Caco-2 (cell line): ENCODE measurements at regions of chr20 and their contacts with region 1.

Region 1: DNA sequence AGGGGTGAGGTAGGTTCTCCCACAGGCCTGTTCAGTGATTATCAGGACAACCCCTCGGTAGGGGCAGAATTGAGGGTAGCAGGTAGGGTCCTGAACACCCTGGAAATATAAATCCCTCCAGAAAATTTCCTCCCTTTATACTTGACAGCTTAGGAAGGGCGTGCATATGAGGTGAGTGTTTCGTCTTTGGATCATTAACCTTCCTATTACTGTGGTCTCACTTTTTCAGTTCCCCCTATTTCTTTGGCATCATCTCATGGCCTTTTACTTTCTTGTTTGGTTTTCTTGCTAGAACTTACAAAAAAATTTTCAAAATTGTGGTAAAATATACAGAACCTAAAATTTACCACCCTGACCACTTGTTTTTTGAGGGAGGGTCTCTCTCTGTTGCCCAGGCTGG is 18.7 kb upstream of the EPB41L1 start:
- DNase-seq: no peak
- H3K4me3 ChIP-seq: no peak overlapping the region
- H3K4me3 Mint-ChIP-seq: no peak overlapping the region
- H3K27ac Mint-ChIP-seq: no peak overlapping the region
- H3K4me1 ChIP-seq: peaks cover 4% of the 10 kb centered on the region
- H3K4me1 Mint-ChIP-seq: peaks cover 17% of the 10 kb centered on the region
- H3K27me3 ChIP-seq: no peaks in the 10 kb centered on the region
- H3K27me3 Mint-ChIP-seq: no peaks in the 10 kb centered on the region
- CTCF ChIP-seq: no peak

Region 2: GRCh38 chr20:36017034-36017951 is 118.5 kb before region 1 on chr20:
- CTCF ChIA-PET with region 1: interaction called, 19 read pairs
- POLR2A ChIA-PET with region 1: no interaction called
- intact Hi-C with region 1: no loop called
- DNase-seq: peak; percentile 29 to 37
- H3K4me3 ChIP-seq: no peak overlapping the region
- H3K4me3 Mint-ChIP-seq: no peak overlapping the region
- H3K27ac Mint-ChIP-seq: peak overlapping the region; percentile 77
- H3K4me1 ChIP-seq: peaks cover 20% of the 10 kb centered on the region
- H3K4me1 Mint-ChIP-seq: peaks cover 22% of the 10 kb centered on the region
- H3K27me3 ChIP-seq: no peaks in the 10 kb centered on the region
- H3K27me3 Mint-ChIP-seq: no peaks in the 10 kb centered on the region
- CTCF ChIP-seq: no peak

Region 3: DNA sequence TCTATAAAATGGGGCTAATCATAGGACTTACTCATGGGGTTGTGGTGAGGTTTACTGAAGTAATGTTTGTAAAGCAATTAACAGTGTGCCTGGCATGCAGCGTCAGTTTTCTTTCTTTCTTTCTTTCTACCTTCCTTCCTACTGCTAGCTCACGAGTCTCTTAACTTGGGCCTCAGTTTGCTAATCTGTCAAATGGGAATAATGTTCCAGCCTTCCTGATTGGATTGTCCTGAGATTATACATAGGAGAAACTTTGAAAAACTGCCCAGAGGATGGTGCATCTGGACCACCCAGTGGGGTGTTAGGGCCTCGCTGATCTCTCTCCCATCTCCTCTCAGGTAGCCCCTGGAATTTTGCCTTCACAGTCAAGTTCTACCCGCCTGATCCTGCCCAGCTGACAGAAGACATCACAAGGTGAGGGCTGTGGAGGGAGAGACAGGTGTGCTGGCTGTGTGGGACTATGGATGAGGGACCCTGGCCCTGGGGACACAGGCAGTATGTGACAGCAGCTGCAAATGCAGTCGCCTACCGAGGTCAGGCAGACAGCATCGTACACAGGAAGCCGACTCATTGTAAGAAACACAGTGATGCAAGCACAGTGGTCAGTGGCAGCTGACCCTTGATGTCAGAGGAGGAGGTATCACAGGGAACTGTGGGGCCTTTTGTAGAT is 46.2 kb after region 1 on chr20:
- CTCF ChIA-PET with region 1: no interaction called
- POLR2A ChIA-PET with region 1: no interaction called
- intact Hi-C with region 1: no loop called
- DNase-seq: no peak
- H3K4me3 ChIP-seq: no peak overlapping the region
- H3K4me3 Mint-ChIP-seq: no peak overlapping the region
- H3K27ac Mint-ChIP-seq: no peak overlapping the region
- H3K4me1 ChIP-seq: no peaks in the 10 kb centered on the region
- H3K4me1 Mint-ChIP-seq: no peaks in the 10 kb centered on the region
- H3K27me3 ChIP-seq: no peaks in the 10 kb centered on the region
- H3K27me3 Mint-ChIP-seq: no peaks in the 10 kb centered on the region
- CTCF ChIP-seq: no peak